Transverse colon (tissue), 4 donors: ENCODE measurements at regions of chr7 and their contacts with region 1.

Region 1: DNA sequence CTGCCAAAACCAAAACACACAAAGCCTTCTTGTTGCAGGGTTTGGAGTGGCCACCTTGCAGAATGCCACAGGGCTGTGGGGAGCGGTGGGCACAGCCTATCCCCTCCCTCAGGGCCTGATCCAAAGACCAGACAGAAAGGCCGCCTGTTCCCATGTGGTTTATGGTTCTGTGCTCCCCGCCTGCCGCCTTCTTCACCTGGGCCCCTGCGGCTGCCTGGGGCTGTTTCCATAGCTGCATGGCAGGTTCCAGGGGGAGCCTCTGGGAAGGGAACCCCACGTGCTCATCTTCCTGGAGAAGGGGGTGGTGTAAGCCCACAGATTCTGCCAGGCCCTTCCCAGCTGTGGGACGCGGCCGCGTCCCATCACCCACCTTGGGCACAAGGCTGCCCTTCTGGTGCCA is 70.7 kb upstream of the EZH2 start:
- DNase-seq: no peak
- H3K4me3 ChIP-seq: no peak overlapping the region
- H3K27ac ChIP-seq: no peak overlapping the region
- H3K4me1 ChIP-seq: no peaks in the 10 kb centered on the region
- H3K27me3 ChIP-seq: no peaks in the 10 kb centered on the region
- CTCF ChIP-seq: no peak
- EP300 ChIP-seq: no peak
- POLR2A ChIP-seq: no peak

Region 2: GRCh38 chr7:148575640-148576411 is 378.9 kb before region 1 on chr7:
- in situ Hi-C with region 1: loop called in 1 of 4 experiments (anchors 10 kb)
- intact Hi-C with region 1: no loop called
- DNase-seq: peak; percentile 68
- H3K4me3 ChIP-seq: no peak overlapping the region
- H3K27ac ChIP-seq: no peak overlapping the region
- H3K4me1 ChIP-seq: no peaks in the 10 kb centered on the region
- H3K27me3 ChIP-seq: no peaks in the 10 kb centered on the region
- CTCF ChIP-seq: peak; percentile 68 to 83 (median 73)
- EP300 ChIP-seq: no peak
- POLR2A ChIP-seq: no peak